ENCODE measurements at regions of chr10 and their contacts with region 1.

Region 1: DNA sequence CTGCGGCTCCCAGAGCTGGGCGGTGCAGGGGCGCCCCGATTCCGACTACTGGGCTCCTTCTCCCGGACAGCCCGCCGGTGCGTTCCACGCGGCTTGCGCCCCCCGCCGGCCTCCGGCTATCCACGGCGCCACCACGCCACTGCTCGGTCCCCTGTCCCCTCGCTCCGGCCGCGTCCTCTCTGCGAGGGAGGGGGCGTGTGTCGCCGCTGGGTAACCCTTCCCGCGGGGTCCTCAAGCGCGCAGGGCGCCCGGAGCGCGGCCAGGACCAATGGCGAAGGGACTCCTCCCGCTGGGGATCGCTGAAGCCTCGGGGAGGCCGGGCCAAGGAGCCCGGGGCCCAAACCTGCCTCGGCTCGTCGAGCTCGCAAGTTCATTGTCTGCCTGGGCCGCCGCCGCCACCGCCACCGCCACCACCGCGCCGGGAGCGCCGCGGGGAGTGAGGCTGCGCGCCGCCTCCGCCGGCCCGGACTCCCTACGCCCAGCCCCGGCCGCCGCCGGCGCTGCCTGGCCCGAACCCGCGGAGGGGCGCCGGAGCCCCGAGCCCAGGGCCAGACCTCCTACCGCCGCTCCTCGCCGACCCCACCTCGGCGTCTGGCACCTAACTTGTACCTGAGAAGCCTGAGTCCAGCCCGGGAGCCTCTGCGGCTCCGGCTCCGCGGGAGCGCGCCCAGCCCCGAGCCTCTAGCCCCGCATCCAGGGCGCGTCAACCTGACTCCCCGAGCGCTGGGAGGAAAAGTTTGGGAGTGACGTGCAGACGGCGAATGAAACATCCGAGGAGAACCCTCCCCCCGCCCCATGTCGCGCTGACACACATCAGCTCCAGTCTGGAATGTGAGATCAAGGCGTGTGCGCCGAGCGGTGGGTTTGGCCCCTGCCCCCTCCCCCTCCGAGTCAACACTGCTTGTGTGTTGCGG is at the start of gene CHST15:
- DNase-seq: no peak
- H3K4me3 Mint-ChIP-seq: no peak within 1 kb of the TSS
- H3K27ac Mint-ChIP-seq: no peak within 1 kb of the TSS
- H3K4me1 Mint-ChIP-seq: no peaks in the 10 kb centered on the region
- H3K27me3 Mint-ChIP-seq: peaks cover 61% of the 10 kb centered on the region
- total RNA-seq, gene CHST15: 0.07 TPM in 1 of 2 replicates, not detected in the other

Region 2: GRCh38 chr10:123147635-123148413 is 945.3 kb before region 1 on chr10 and contains the start of gene HMX2:
- intact Hi-C with region 1: loop called (anchors 10 kb)
- DNase-seq: peak; percentile 12
- H3K4me3 Mint-ChIP-seq: peak within 1 kb of the TSS; percentile 57
- H3K27ac Mint-ChIP-seq: peak within 1 kb of the TSS; percentile 49
- H3K4me1 Mint-ChIP-seq: peaks cover 26% of the 10 kb centered on the region
- H3K27me3 Mint-ChIP-seq: peaks cover 69% of the 10 kb centered on the region
- total RNA-seq, gene HMX2: not detected in 2 replicates